ENCODE measurements at regions of chr20 and their contacts with region 1.

Region 1: DNA sequence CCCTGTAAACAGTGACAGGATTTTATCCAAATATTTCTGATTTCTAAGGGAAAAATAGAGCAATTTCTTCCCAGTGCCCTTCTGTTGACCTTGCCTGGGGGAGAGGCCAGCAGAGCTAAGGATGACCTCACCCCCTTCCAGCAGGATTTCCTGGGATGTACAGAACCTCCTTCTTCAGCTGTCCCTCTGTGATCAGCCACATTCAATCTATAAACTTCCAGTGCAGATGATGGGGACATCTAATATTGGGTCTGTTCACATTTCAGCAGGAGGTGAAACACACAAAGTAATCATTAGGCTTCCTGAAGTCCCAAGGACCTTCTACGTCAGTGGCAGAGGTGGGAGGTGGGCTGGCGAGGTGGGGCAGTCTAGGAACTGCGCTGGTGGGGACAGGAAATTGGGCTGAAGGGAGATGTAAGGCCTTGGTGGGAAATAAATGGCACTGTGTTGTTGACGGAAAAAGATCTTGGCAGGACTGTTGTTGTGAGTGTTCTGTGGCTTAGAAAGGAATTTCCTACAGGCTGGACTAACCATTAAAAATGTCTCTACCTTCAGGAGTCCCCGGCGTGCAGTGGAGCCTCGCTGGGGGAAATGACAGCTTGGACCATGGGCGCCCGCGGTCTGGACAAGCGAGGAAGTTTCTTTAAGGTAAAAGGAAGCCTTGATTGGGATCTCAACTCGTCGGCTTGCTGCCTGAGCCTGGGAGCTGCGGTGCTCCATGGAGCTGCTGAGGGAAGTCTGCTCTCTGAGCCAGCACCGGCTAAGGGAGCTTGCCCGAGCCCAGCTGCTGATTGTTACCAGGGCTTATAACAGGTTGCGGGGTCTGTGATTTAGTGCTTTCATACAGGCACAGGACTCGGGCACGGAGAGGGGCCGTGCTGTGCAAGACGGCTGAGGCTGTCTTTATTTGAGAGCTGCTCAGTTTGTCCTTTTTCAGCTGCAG is 127.9 kb upstream of the NAA20 start:
- DNase-seq: peak in 1 of 2 donors; percentile 71
- H3K4me3 ChIP-seq: peak overlapping the region; percentile 54 to 55
- H3K27ac ChIP-seq: peak overlapping the region; percentile 87 to 90
- H3K4me1 ChIP-seq: peaks cover 2 to 43% of the 10 kb centered on the region in 2 donors
- H3K27me3 ChIP-seq: no peaks in the 10 kb centered on the region
- CTCF ChIP-seq: no peak

Region 2: GRCh38 chr20:19692685-19693119 is 196.6 kb before region 1 on chr20:
- intact Hi-C with region 1: loop called (anchors 5 kb)
- DNase-seq: peak in 1 of 2 donors; percentile 76
- H3K4me3 ChIP-seq: peak overlapping the region in 1 of 2 donors; percentile 31
- H3K27ac ChIP-seq: no peak overlapping the region
- H3K4me1 ChIP-seq: peaks cover 2 to 11% of the 10 kb centered on the region in 2 donors
- H3K27me3 ChIP-seq: no peaks in the 10 kb centered on the region
- CTCF ChIP-seq: peak; percentile 75 to 90 (median 89)

Region 3: GRCh38 chr20:19784511-19785172 is 104.6 kb before region 1 on chr20:
- intact Hi-C with region 1: loop called (anchors 5 kb)
- DNase-seq: peak in 1 of 2 donors; percentile 69
- H3K4me3 ChIP-seq: no peak overlapping the region
- H3K27ac ChIP-seq: peak overlapping the region; percentile 12 to 57
- H3K4me1 ChIP-seq: peaks cover 4 to 20% of the 10 kb centered on the region in 2 donors
- H3K27me3 ChIP-seq: no peaks in the 10 kb centered on the region
- CTCF ChIP-seq: peak; percentile 63 to 84 (median 75)

Region 4: GRCh38 chr20:19947611-19948264 is 58.5 kb after region 1 on chr20:
- intact Hi-C with region 1: loop called (anchors 10 kb)
- DNase-seq: no peak
- H3K4me3 ChIP-seq: no peak overlapping the region
- H3K27ac ChIP-seq: peak overlapping the region; percentile 78 to 94
- H3K4me1 ChIP-seq: peaks cover 13 to 26% of the 10 kb centered on the region in 2 donors
- H3K27me3 ChIP-seq: no peaks in the 10 kb centered on the region
- CTCF ChIP-seq: no peak

Region 5: DNA sequence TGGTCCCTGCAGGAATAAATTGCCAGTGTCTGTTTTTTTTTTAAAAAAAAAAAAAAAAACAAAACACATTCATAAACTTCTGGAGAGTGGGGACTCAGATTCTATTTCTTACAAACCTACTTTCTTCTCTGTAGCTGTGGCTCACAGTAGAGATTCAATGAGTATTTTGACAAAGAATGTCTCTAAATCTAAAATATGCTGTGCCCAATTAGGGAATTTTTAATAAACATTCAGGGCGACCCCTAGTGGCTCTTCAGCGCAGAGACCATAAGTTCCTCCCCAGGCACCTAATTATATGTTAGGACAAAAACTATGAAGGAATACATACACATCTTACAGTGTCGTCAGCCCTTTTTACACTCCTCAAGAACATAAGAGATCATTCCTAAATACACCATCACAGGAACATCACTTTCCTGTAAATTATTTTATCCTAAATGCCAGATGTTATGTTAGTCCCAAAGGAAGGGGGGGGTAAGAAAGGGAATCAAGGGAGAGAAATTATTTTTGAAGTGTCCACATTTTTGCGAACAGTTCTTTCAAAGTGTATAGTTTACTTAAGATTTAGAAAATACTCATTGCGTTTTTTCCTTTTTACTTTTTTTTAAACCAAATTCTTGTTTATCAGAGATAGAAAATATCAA is 106.1 kb after region 1 on chr20:
- intact Hi-C with region 1: loop called (anchors 5 kb)
- DNase-seq: no peak
- H3K4me3 ChIP-seq: no peak overlapping the region
- H3K27ac ChIP-seq: peak overlapping the region; percentile 70 to 80
- H3K4me1 ChIP-seq: peaks cover 19 to 40% of the 10 kb centered on the region in 2 donors
- H3K27me3 ChIP-seq: no peaks in the 10 kb centered on the region
- CTCF ChIP-seq: peak; percentile 75 to 80 (median 78)

Measured in ascending aorta (tissue), 2 donors.